ENCODE measurements at regions of chr11 and their contacts with region 1.

Region 1: GRCh38 chr11:111777094-111778046 is 11.2 kb upstream of the PPP2R1B start:
- DNase-seq: no peak
- ATAC-seq: peak; percentile 84
- H3K4me3 Mint-ChIP-seq: no peak overlapping the region
- H3K27ac Mint-ChIP-seq: no peak overlapping the region
- H3K4me1 Mint-ChIP-seq: peaks cover 7% of the 10 kb centered on the region
- H3K27me3 Mint-ChIP-seq: no peaks in the 10 kb centered on the region
- CTCF ChIP-seq: peak; percentile 48

Region 2: GRCh38 chr11:111604392-111605009 is 172.9 kb before region 1 on chr11:
- CTCF ChIA-PET with region 1: interaction called, 16 read pairs
- POLR2A ChIA-PET with region 1: no interaction called
- DNase-seq: no peak
- ATAC-seq: no peak
- H3K4me3 Mint-ChIP-seq: peak overlapping the region; percentile 86
- H3K27ac Mint-ChIP-seq: no peak overlapping the region
- H3K4me1 Mint-ChIP-seq: peaks cover 27% of the 10 kb centered on the region
- H3K27me3 Mint-ChIP-seq: peaks cover 24% of the 10 kb centered on the region
- CTCF ChIP-seq: peak; percentile 36; the same call in 1 of the 2 replicates

Region 3: GRCh38 chr11:111766093-111766833 is 11.1 kb before region 1 on chr11 and contains the start of gene PPP2R1B:
- CTCF ChIA-PET with region 1: interaction called, 18 read pairs
- POLR2A ChIA-PET with region 1: interaction called, 6 read pairs
- DNase-seq: peak; percentile 74
- ATAC-seq: peak; percentile 90
- H3K4me3 Mint-ChIP-seq: peak within 1 kb of the TSS; percentile 87
- H3K27ac Mint-ChIP-seq: peak within 1 kb of the TSS; percentile 98
- H3K4me1 Mint-ChIP-seq: peaks cover 45% of the 10 kb centered on the region
- H3K27me3 Mint-ChIP-seq: no peaks in the 10 kb centered on the region
- CTCF ChIP-seq: no peak
- total RNA-seq, gene PPP2R1B: 74.5 to 87.7 TPM (median 75.2 TPM) in 3 replicates

Region 4: GRCh38 chr11:111823131-111823530 is 45.8 kb after region 1 on chr11:
- CTCF ChIA-PET with region 1: interaction called, 14 read pairs
- POLR2A ChIA-PET with region 1: no interaction called
- DNase-seq: no peak
- ATAC-seq: peak; percentile 79
- H3K4me3 Mint-ChIP-seq: peak overlapping the region; percentile 4
- H3K27ac Mint-ChIP-seq: peak overlapping the region; percentile 99
- H3K4me1 Mint-ChIP-seq: peaks cover 44% of the 10 kb centered on the region
- H3K27me3 Mint-ChIP-seq: no peaks in the 10 kb centered on the region
- CTCF ChIP-seq: no peak

Region 5: GRCh38 chr11:111833524-111833923 is 56.2 kb after region 1 on chr11:
- CTCF ChIA-PET with region 1: interaction called, 14 read pairs
- POLR2A ChIA-PET with region 1: no interaction called
- DNase-seq: no peak
- ATAC-seq: no peak
- H3K4me3 Mint-ChIP-seq: no peak overlapping the region
- H3K27ac Mint-ChIP-seq: no peak overlapping the region
- H3K4me1 Mint-ChIP-seq: no peaks in the 10 kb centered on the region
- H3K27me3 Mint-ChIP-seq: no peaks in the 10 kb centered on the region
- CTCF ChIP-seq: no peak

Measured in WTC11 (cell line).